Stomach (tissue), 19 donors: ENCODE measurements at regions of chr14 and their contacts with region 1.

Region 1: GRCh38 chr14:49461529-49462401 is 124.4 kb downstream of the RPS29 start:
- DNase-seq: peak; percentile 70 to 87
- H3K4me3 ChIP-seq: no peak overlapping the region
- H3K27ac ChIP-seq: no peak overlapping the region
- H3K4me1 ChIP-seq: no peaks in the 10 kb centered on the region
- H3K27me3 ChIP-seq: no peaks in the 10 kb centered on the region
- CTCF ChIP-seq: peak in 5 of 7 experiments; percentile 46 to 75 (median 72)
- EP300 ChIP-seq: no peak
- POLR2A ChIP-seq: no peak

Region 2: GRCh38 chr14:49286974-49287363 is 174.8 kb before region 1 on chr14:
- intact Hi-C with region 1: no loop called
- DNase-seq: no peak
- H3K4me3 ChIP-seq: no peak overlapping the region
- H3K27ac ChIP-seq: no peak overlapping the region
- H3K4me1 ChIP-seq: no peaks in the 10 kb centered on the region
- H3K27me3 ChIP-seq: no peaks in the 10 kb centered on the region
- CTCF ChIP-seq: no peak
- EP300 ChIP-seq: no peak
- POLR2A ChIP-seq: no peak

Region 3: DNA sequence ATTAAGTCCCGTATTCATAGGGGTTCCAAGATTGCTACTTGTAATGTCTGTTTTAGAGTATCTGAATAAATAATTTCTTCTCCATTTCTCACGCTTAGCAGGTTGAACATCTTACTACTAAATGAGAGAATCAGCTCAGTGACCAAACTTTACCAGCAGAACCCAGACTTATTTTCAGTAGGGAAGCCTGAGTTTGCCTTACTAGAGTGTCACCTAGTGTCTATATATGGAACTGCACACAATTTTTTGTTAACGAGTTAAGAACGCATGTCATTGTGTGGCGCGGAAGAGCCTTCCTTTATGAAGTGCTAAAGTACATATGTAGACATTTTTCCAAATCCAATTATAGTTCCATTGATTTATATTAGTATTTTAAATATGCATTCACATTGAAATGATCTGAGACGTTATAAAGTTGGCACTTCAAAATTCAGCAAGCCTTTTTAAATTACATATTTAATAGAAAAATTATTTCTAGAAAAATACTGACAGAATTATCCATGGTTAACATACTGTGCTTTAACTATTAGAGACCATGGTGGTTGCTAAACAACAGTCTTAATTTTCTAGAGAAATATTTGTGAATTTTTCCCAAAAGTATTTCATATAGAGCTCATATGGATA is 36.1 kb after region 1 on chr14:
- intact Hi-C with region 1: loop called (anchors 5 kb)
- DNase-seq: peak in 1 of 2 donors; percentile 83
- H3K4me3 ChIP-seq: no peak overlapping the region
- H3K27ac ChIP-seq: no peak overlapping the region
- H3K4me1 ChIP-seq: no peaks in the 10 kb centered on the region
- H3K27me3 ChIP-seq: peaks cover 0 to 10% (median 0%) of the 10 kb centered on the region in 3 donors
- CTCF ChIP-seq: peak in 6 of 7 experiments; percentile 9 to 92 (median 86)
- EP300 ChIP-seq: no peak
- POLR2A ChIP-seq: no peak